BJ (cell line): ENCODE measurements at regions of chr11 and their contacts with region 1.

Region 1: GRCh38 chr11:77879218-77879617 is 58.3 kb downstream of the AAMDC start:
- DNase-seq: no peak
- H3K4me3 ChIP-seq: no peak overlapping the region
- H3K27me3 ChIP-seq: no peaks in the 10 kb centered on the region
- CTCF ChIP-seq: no peak

Region 2: GRCh38 chr11:77771135-77771534 is 108.1 kb before region 1 on chr11:
- CTCF ChIA-PET with region 1: no interaction called
- POLR2A ChIA-PET with region 1: no interaction called
- DNase-seq: no peak
- H3K4me3 ChIP-seq: no peak overlapping the region
- H3K27me3 ChIP-seq: no peaks in the 10 kb centered on the region
- CTCF ChIP-seq: no peak

Region 3: DNA sequence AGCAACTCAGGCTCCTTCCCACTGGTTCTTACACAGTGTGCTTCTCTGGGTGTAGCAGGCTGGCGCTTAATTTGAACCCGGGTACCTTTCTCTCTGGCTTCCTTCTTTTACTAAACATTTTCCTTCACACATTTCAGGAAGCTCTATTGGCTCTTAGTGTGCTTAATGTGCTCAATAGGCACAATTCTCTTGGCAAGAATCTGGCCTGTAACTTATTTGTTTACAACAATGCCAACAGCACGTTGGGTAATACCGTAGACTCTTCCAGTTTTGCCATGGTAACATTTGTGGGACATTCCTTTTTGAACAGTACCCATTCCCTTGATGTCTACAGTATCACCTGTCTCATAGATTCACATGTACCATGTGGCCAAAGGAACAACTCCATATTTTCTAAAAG is 10.5 kb before region 1 on chr11:
- CTCF ChIA-PET with region 1: interaction called, 3 read pairs
- POLR2A ChIA-PET with region 1: interaction called, 15 read pairs
- DNase-seq: no peak
- H3K4me3 ChIP-seq: no peak overlapping the region
- H3K27me3 ChIP-seq: no peaks in the 10 kb centered on the region
- CTCF ChIP-seq: no peak